Activated B cell treated with CpG ODN at 0.5 μM for 24 hours (primary cell): ENCODE measurements at regions of chr6 and their contacts with region 1.

Region 1: DNA sequence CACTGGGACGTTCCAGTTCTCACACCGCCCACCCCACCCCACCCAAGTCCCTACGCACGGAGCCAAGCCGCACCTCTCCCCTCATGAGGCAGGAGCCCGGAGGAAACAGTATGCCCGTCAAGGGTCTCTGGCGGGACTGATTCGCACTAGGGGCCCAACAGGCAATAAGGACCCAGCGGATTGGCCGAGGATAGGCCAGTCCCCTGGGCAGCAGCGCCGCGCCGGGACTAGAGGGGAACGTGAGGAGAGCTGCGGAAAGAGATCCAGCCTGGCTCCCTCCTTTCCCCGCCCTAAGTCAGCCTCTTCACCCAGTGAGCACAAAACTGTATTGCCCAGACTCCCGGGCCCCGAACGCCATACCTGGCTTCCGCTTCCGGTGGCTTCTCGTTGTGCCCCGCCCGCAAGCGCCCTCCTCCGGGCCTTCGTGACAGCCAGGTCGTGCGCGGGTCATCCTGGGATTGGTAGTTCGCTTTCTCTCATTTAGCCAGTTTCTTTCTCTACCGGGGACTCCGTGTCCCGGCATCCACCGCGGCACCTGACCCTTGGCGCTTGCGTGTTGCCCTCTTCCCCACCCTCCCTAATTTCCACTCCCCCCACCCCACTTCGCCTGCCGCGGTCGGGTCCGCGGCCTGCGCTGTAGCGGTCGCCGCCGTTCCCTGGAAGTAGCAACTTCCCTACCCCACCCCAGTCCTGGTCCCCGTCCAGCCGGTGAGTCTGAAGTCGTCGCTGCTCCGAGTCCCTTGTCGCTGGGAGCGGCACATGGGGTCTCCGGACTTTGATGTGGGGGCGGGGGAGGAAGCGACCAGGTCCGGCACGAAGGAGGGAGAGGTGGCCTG is at the start of gene CSNK2B:
- DNase-seq: peak; percentile 91
- ATAC-seq: peak; percentile 86
- H3K4me3 Mint-ChIP-seq: peak within 1 kb of the TSS; percentile 96
- H3K27ac Mint-ChIP-seq: peak within 1 kb of the TSS; percentile 95
- H3K4me1 Mint-ChIP-seq: peaks cover 61% of the 10 kb centered on the region
- H3K27me3 Mint-ChIP-seq: no peaks in the 10 kb centered on the region
- CTCF ChIP-seq: no peak
- total RNA-seq, gene CSNK2B: 190 and 191 TPM in 2 replicates

Region 2: GRCh38 chr6:31493875-31494694 is 171.6 kb before region 1 on chr6:
- CTCF ChIA-PET with region 1: interaction called, 3 read pairs
- POLR2A ChIA-PET with region 1: no interaction called
- intact Hi-C with region 1: loop called (anchors 1 kb)
- DNase-seq: peak; percentile 76
- ATAC-seq: peak; percentile 48
- H3K4me3 Mint-ChIP-seq: peak overlapping the region; percentile 90
- H3K27ac Mint-ChIP-seq: peak overlapping the region; percentile 92
- H3K4me1 Mint-ChIP-seq: peaks cover 54% of the 10 kb centered on the region
- H3K27me3 Mint-ChIP-seq: no peaks in the 10 kb centered on the region
- CTCF ChIP-seq: no peak

Region 3: GRCh38 chr6:31636698-31637596 is 28.8 kb before region 1 on chr6:
- CTCF ChIA-PET with region 1: no interaction called
- POLR2A ChIA-PET with region 1: no interaction called
- intact Hi-C with region 1: no loop called
- DNase-seq: no peak
- ATAC-seq: no peak
- H3K4me3 Mint-ChIP-seq: no peak overlapping the region
- H3K27ac Mint-ChIP-seq: peak overlapping the region; percentile 12
- H3K4me1 Mint-ChIP-seq: no peaks in the 10 kb centered on the region
- H3K27me3 Mint-ChIP-seq: no peaks in the 10 kb centered on the region
- CTCF ChIP-seq: no peak

Region 4: DNA sequence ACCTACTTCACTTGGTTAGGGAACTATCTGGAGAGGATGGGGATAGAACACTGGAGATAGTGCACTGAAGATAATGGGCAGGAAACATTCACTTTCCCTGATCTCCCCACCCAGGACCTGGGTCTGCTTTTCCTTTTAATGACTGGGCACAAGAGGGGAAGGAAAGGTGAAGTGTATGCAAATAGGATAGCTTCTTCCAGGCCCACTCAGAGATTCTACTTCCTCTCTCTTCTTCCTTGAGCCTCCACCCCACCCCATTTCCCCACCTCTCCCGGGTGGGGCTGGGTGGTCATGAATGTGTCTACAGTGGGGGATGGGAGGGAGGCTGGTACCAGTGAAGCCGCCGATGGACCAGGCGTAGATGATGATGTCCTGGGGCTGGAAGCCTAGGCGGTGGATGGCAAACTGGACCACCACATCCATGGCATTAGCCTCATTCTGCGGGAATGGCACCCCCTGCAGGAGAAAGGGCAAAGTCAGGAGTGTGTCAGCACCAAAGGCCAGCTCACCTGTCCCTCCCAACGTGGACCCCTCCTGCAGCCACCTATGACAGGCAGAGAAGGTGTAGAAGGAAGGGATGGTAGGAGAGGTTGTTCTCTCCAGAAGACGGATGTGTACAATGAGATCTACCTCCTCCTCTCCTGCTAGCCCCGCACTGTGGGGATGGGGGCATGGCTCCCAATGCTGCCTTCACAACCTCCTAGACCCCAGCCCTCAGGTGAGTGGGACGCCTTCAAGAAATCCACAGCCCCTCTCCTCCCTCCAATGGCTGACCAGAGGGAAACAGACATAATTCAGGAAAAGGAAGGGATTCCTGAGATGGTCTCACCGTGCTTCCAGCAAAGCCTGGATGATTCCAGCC is 23.8 kb after region 1 on chr6:
- CTCF ChIA-PET with region 1: no interaction called
- POLR2A ChIA-PET with region 1: no interaction called
- intact Hi-C with region 1: no loop called
- DNase-seq: no peak
- ATAC-seq: no peak
- H3K4me3 Mint-ChIP-seq: no peak overlapping the region
- H3K27ac Mint-ChIP-seq: no peak overlapping the region
- H3K4me1 Mint-ChIP-seq: peaks cover 15% of the 10 kb centered on the region
- H3K27me3 Mint-ChIP-seq: no peaks in the 10 kb centered on the region
- CTCF ChIP-seq: no peak

Region 5: DNA sequence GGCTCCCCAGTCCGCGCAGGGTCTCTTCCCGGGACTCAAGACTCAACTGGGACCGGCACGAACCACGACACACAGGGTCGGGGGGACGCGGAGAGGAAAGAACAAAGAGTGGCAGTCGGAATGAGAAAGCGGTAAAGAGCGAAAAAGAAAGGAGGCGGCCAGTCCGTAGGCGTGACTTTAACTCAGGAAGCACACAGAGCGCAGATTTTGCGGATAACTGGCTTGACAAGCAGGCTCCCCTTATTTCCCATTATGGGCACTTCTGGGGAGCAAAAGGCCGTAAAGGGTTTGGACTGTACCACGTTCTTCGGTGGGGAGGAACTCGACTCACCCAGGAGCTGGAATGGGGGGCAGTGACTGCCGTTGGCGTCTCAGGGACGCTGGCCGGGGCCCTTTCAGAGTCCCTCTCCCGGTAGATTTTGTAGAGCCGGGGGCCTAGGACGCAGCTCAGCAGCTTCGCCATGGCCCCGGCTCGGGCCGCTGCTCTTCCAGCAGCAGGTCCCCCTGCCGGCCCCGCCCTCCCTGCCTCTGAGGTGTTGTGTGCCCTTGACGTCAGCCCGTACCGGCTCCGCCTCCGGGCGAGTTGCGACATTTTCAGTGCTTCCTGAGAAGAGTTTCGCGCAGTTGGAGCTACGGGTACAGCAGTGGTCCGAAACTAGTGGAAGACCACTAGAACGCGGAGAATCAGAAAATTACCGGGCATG is 37.3 kb after region 1 on chr6 and contains the start of gene ABHD16A:
- CTCF ChIA-PET with region 1: no interaction called
- POLR2A ChIA-PET with region 1: interaction called, 15 read pairs
- intact Hi-C with region 1: loop called (anchors 1 kb)
- DNase-seq: peak; percentile 94
- ATAC-seq: peak; percentile 93
- H3K4me3 Mint-ChIP-seq: peak within 1 kb of the TSS; percentile 99
- H3K27ac Mint-ChIP-seq: peak within 1 kb of the TSS; percentile 89
- H3K4me1 Mint-ChIP-seq: peaks cover 28% of the 10 kb centered on the region
- H3K27me3 Mint-ChIP-seq: no peaks in the 10 kb centered on the region
- CTCF ChIP-seq: no peak
- total RNA-seq, gene ABHD16A: 49.3 and 59.1 TPM in 2 replicates

Region 6: GRCh38 chr6:31717499-31718222 is 51.9 kb after region 1 on chr6:
- CTCF ChIA-PET with region 1: no interaction called
- POLR2A ChIA-PET with region 1: no interaction called
- intact Hi-C with region 1: no loop called
- DNase-seq: no peak
- ATAC-seq: no peak
- H3K4me3 Mint-ChIP-seq: no peak overlapping the region
- H3K27ac Mint-ChIP-seq: no peak overlapping the region
- H3K4me1 Mint-ChIP-seq: no peaks in the 10 kb centered on the region
- H3K27me3 Mint-ChIP-seq: no peaks in the 10 kb centered on the region
- CTCF ChIP-seq: no peak

Region 7: DNA sequence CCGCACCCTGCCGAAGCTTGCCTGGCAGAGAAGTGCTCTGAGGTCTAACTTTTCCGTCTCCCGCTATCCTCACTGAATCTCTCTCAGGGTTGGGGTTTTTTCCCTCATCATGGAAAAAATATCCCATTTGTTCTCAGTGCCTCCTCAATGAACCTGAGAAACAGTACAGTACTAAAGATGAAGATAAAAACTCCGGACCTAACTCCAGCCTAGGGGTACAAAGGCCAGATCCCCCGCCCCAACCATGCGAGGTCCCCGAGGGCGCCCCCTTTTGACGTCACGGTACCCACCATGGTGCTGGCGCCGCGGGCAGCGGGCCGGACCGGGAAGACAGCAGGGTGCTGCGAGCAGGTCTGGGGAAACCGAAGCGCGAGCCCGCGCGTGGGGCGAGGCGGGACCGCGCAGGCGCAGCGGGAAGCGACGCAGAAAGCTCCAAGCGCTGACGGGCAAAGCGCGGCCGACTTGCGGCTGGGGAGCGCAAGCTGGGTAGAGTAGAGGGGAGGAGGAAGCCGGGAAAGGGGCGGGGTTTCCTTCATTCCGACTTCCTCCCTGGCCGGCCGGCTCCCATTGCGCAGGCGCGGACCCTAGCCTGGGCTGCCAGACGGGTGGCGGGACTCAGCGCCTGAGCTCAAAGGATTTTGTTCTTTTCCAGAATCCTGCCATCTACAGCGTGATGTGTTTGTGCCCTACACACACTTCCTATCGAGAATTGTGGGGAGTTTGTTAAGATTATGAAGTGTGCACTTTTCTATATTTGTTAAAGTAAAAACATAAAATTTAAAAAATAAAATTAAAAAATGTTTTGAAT is 140.9 kb after region 1 on chr6 and contains the start of gene LSM2:
- CTCF ChIA-PET with region 1: no interaction called
- POLR2A ChIA-PET with region 1: interaction called, 6 read pairs
- intact Hi-C with region 1: loop called (anchors 1 kb)
- DNase-seq: peak; percentile 89
- ATAC-seq: peak; percentile 98
- H3K4me3 Mint-ChIP-seq: peak within 1 kb of the TSS; percentile 94
- H3K27ac Mint-ChIP-seq: peak within 1 kb of the TSS; percentile 89
- H3K4me1 Mint-ChIP-seq: peaks cover 16% of the 10 kb centered on the region
- H3K27me3 Mint-ChIP-seq: no peaks in the 10 kb centered on the region
- CTCF ChIP-seq: no peak
- total RNA-seq, gene LSM2: 61.8 and 68.6 TPM in 2 replicates

Region 8: DNA sequence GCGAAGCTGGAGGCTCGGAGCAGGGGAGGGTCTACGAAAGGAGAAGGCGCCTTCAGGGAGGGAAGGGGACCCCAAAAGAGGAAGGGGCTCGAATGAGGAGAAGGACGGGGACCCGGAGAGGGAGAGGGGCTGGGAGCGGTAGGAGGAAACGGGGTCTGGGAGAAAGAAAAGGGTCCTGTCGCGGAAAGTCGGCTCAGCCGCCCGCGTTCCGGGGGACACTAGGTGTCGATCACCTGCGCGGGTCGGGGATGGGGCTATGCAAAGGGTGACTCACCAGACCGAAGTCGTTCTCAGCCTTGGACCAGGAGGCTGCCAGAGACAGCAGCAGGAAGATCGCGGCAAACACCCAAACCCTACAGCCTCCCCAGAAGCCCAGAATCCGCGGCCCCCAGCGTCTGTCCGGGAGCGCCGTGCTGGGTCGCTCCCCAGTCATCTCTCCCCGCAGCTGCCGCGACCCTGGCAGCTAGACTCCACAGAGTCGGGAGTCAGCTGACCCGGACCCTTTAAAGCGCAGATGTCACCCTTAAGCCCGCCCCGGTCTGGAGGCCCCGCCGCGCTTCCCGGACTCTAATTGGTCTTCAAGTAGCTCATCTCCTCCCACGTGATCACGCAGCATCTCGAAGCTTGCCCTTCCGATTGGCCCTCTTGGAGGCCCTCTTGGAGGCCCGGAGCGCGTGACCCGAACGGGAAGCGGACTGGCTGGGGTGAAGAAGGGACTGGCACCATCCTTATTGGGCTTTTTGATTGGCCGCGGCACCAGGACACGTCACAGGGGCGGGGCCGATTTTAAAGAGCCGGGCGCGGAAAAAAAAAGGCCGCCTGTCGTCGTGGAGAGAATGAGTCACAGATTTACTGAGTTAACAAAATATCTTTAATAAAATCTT is 196.9 kb after region 1 on chr6 and contains the start of gene NEU1:
- CTCF ChIA-PET with region 1: no interaction called
- POLR2A ChIA-PET with region 1: interaction called, 8 read pairs
- intact Hi-C with region 1: loop called (anchors 1 kb)
- DNase-seq: peak; percentile 93
- ATAC-seq: peak; percentile 91
- H3K4me3 Mint-ChIP-seq: peak within 1 kb of the TSS; percentile 95
- H3K27ac Mint-ChIP-seq: peak within 1 kb of the TSS; percentile 93
- H3K4me1 Mint-ChIP-seq: peaks cover 21% of the 10 kb centered on the region
- H3K27me3 Mint-ChIP-seq: no peaks in the 10 kb centered on the region
- CTCF ChIP-seq: no peak
- total RNA-seq, gene NEU1: 18.3 and 19.2 TPM in 2 replicates

Region 9: GRCh38 chr6:32177788-32178546 is 512.2 kb after region 1 on chr6 and contains the start of gene RNF5:
- CTCF ChIA-PET with region 1: no interaction called
- POLR2A ChIA-PET with region 1: no interaction called
- intact Hi-C with region 1: loop called (anchors 10 kb)
- DNase-seq: peak; percentile 63
- ATAC-seq: peak; percentile 82
- H3K4me3 Mint-ChIP-seq: peak within 1 kb of the TSS; percentile 96
- H3K27ac Mint-ChIP-seq: peak within 1 kb of the TSS; percentile 99
- H3K4me1 Mint-ChIP-seq: peaks cover 54% of the 10 kb centered on the region
- H3K27me3 Mint-ChIP-seq: no peaks in the 10 kb centered on the region
- CTCF ChIP-seq: no peak
- total RNA-seq, gene RNF5: 39.7 and 41.8 TPM in 2 replicates